H1 (cell line): ENCODE measurements at regions of chr1 and their contacts with region 1.

Region 1: GRCh38 chr1:213104604-213105003 is 53.6 kb downstream of the RPS6KC1 start:
- DNase-seq: no peak
- H3K4me3 ChIP-seq: no peak overlapping the region
- H3K27ac ChIP-seq: no peak overlapping the region
- H3K4me1 ChIP-seq: no peaks in the 10 kb centered on the region
- H3K27me3 ChIP-seq: no peaks in the 10 kb centered on the region
- CTCF ChIP-seq: no peak
- EP300 ChIP-seq: no peak
- POLR2A ChIP-seq: no peak
- RAD21 ChIP-seq: no peak

Region 2: GRCh38 chr1:212928323-212929291 is 176.0 kb before region 1 on chr1:
- CTCF ChIA-PET with region 1: no interaction called
- POLR2A ChIA-PET with region 1: no interaction called
- DNase-seq: peak in 1 of 2 experiments; percentile 54
- H3K4me3 ChIP-seq: peak overlapping the region in 1 of 4 experiments; percentile 16; a peak in 1 of 8 replicates
- H3K27ac ChIP-seq: peak overlapping the region; percentile 5; the same call in 1 of the 2 replicates
- H3K4me1 ChIP-seq: peaks cover 9 to 20% (median 14%) of the 10 kb centered on the region in 4 experiments
- H3K27me3 ChIP-seq: no peaks in the 10 kb centered on the region
- CTCF ChIP-seq: no peak
- EP300 ChIP-seq: no peak
- POLR2A ChIP-seq: no peak
- RAD21 ChIP-seq: no peak

Region 3: GRCh38 chr1:213122514-213122929 is 17.9 kb after region 1 on chr1:
- CTCF ChIA-PET with region 1: interaction called, 10 read pairs
- POLR2A ChIA-PET with region 1: no interaction called
- DNase-seq: no peak
- H3K4me3 ChIP-seq: no peak overlapping the region
- H3K27ac ChIP-seq: no peak overlapping the region
- H3K4me1 ChIP-seq: no peaks in the 10 kb centered on the region
- H3K27me3 ChIP-seq: no peaks in the 10 kb centered on the region
- CTCF ChIP-seq: peak in 2 of 3 experiments; percentile 17 to 20; a peak in 2 of 4 replicates
- EP300 ChIP-seq: no peak
- POLR2A ChIP-seq: no peak
- RAD21 ChIP-seq: peak; percentile 50 to 63